Heart right ventricle (tissue), 16 donors: ENCODE measurements at regions of chr1 and their contacts with region 1.

Region 1: GRCh38 chr1:28720376-28720775 is 16.4 kb upstream of the YTHDF2 start:
- DNase-seq: no peak
- ATAC-seq: no peak
- H3K4me3 ChIP-seq: no peak overlapping the region
- H3K27ac ChIP-seq: no peak overlapping the region
- H3K4me1 ChIP-seq: peaks cover 0 to 9% (median 0%) of the 10 kb centered on the region in 9 donors
- H3K27me3 ChIP-seq: no peaks in the 10 kb centered on the region
- CTCF ChIP-seq: no peak

Region 2: GRCh38 chr1:28526889-28527288 is 193.5 kb before region 1 on chr1:
- intact Hi-C with region 1: no loop called
- DNase-seq: no peak
- ATAC-seq: no peak
- H3K4me3 ChIP-seq: no peak overlapping the region
- H3K27ac ChIP-seq: no peak overlapping the region
- H3K4me1 ChIP-seq: no peaks in the 10 kb centered on the region
- H3K27me3 ChIP-seq: no peaks in the 10 kb centered on the region
- CTCF ChIP-seq: no peak

Region 3: GRCh38 chr1:28656335-28656734 is 64.0 kb before region 1 on chr1:
- intact Hi-C with region 1: loop called in 2 of 10 experiments (anchors 10 kb)
- DNase-seq: no peak
- ATAC-seq: no peak
- H3K4me3 ChIP-seq: no peak overlapping the region
- H3K27ac ChIP-seq: no peak overlapping the region
- H3K4me1 ChIP-seq: no peaks in the 10 kb centered on the region
- H3K27me3 ChIP-seq: no peaks in the 10 kb centered on the region
- CTCF ChIP-seq: no peak

Region 4: GRCh38 chr1:28668191-28668955 is 52.0 kb before region 1 on chr1 and contains the start of gene GMEB1:
- intact Hi-C with region 1: loop called in 1 of 10 experiments (anchors 10 kb)
- DNase-seq: peak; percentile 83 to 90
- ATAC-seq: peak; percentile 88 to 95 (median 92)
- H3K4me3 ChIP-seq: peak within 1 kb of the TSS; percentile 93 to 100 (median 98)
- H3K27ac ChIP-seq: peak within 1 kb of the TSS; percentile 98 to 100 (median 100)
- H3K4me1 ChIP-seq: peaks cover 5 to 26% (median 18%) of the 10 kb centered on the region in 9 donors
- H3K27me3 ChIP-seq: no peaks in the 10 kb centered on the region
- CTCF ChIP-seq: no peak
- total RNA-seq, gene GMEB1: 5.1 to 7.4 (median 6.4) TPM

Region 5: GRCh38 chr1:28766532-28767183 is 46.3 kb after region 1 on chr1:
- intact Hi-C with region 1: no loop called
- DNase-seq: no peak
- ATAC-seq: no peak
- H3K4me3 ChIP-seq: no peak overlapping the region
- H3K27ac ChIP-seq: no peak overlapping the region
- H3K4me1 ChIP-seq: peaks cover 0 to 10% (median 0%) of the 10 kb centered on the region in 9 donors
- H3K27me3 ChIP-seq: no peaks in the 10 kb centered on the region
- CTCF ChIP-seq: no peak